ENCODE measurements at regions of chr3 and their contacts with region 1.

Region 1: GRCh38 chr3:11549580-11550140 is 94.1 kb downstream of the VGLL4 start:
- DNase-seq: no peak
- ATAC-seq: no peak
- H3K4me3 ChIP-seq: no peak overlapping the region
- H3K27ac ChIP-seq: no peak overlapping the region
- H3K4me1 ChIP-seq: peaks cover 14 to 27% of the 10 kb centered on the region in 2 donors
- H3K27me3 ChIP-seq: no peaks in the 10 kb centered on the region
- CTCF ChIP-seq: no peak
- POLR2A ChIP-seq: no peak

Region 2: GRCh38 chr3:10627885-10628572 is 921.6 kb before region 1 on chr3:
- in situ Hi-C with region 1: no loop called
- intact Hi-C with region 1: no loop called
- DNase-seq: no peak
- ATAC-seq: no peak
- H3K4me3 ChIP-seq: no peak overlapping the region
- H3K27ac ChIP-seq: no peak overlapping the region
- H3K4me1 ChIP-seq: no peaks in the 10 kb centered on the region
- H3K27me3 ChIP-seq: no peaks in the 10 kb centered on the region
- CTCF ChIP-seq: no peak
- POLR2A ChIP-seq: no peak

Region 3: DNA sequence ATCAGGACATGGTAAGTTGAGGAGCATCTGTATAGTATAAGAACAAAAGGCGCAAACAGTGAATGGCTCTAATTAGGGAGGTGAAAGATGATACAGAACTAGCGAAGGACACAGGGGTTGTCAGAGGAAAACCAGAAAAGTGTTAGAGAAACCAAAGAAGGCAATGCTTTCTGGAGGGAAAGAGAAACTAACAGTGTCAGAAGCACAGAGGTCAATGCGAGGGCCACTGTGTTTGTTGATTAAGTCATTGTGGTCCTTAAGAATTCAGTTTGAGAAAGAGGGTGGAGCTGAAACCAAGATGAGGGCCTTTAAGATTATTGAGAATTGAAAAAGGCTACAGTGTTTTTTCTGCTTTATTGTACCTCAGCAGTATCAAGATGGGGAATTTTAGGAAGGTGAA is 248.7 kb before region 1 on chr3:
- in situ Hi-C with region 1: no loop called
- intact Hi-C with region 1: no loop called
- DNase-seq: no peak
- ATAC-seq: no peak
- H3K4me3 ChIP-seq: no peak overlapping the region
- H3K27ac ChIP-seq: no peak overlapping the region
- H3K4me1 ChIP-seq: peaks cover 5 to 8% of the 10 kb centered on the region in 2 donors
- H3K27me3 ChIP-seq: no peaks in the 10 kb centered on the region
- CTCF ChIP-seq: no peak
- POLR2A ChIP-seq: no peak

Region 4: GRCh38 chr3:11581237-11582190 is 31.9 kb after region 1 on chr3:
- in situ Hi-C with region 1: no loop called
- intact Hi-C with region 1: loop called (anchors 1 kb)
- DNase-seq: no peak
- ATAC-seq: peak; percentile 22 to 33
- H3K4me3 ChIP-seq: peak overlapping the region; percentile 29 to 46 (median 38)
- H3K27ac ChIP-seq: peak overlapping the region; percentile 53 to 58 (median 58)
- H3K4me1 ChIP-seq: peaks cover 56 to 66% of the 10 kb centered on the region in 2 donors
- H3K27me3 ChIP-seq: no peaks in the 10 kb centered on the region
- CTCF ChIP-seq: no peak
- POLR2A ChIP-seq: no peak